SK-N-SH (cell line): ENCODE measurements at regions of chr1 and their contacts with region 1.

Region 1: DNA sequence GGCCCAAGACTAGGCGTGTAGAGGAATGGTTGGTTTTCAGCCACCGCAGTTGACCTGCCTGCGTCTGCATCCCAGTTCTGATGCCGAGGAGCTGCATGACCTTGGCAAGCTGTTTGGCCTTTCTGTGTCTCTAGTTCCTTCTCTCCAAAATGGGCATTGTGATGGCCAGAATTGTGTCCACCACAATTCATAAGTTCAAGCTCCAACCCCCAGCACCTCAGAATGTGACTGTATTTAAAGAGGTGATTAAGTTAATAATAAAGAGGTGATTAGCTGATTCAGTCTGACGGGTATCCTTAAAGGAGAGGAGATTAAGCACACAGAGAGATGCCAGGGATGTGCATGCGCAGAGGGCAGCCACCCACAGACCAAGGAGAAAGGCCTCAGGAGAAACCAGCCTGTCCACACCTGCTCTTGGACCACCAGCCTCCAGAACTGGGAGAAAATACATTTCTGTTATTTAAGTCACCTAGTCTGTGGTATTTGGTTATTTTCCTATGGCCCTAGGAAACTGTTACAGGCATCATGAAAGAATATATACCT is 28.5 kb downstream of the MAB21L3 start:
- DNase-seq: no peak
- H3K4me3 ChIP-seq: no peak overlapping the region
- H3K27ac ChIP-seq: no peak overlapping the region
- H3K4me1 ChIP-seq: peaks cover 0 to 3% of the 10 kb centered on the region in 2 experiments; a peak in 1 of 4 replicates
- H3K27me3 ChIP-seq: no peaks in the 10 kb centered on the region
- CTCF ChIP-seq: no peak
- EP300 ChIP-seq: no peak
- RAD21 ChIP-seq: no peak

Region 2: DNA sequence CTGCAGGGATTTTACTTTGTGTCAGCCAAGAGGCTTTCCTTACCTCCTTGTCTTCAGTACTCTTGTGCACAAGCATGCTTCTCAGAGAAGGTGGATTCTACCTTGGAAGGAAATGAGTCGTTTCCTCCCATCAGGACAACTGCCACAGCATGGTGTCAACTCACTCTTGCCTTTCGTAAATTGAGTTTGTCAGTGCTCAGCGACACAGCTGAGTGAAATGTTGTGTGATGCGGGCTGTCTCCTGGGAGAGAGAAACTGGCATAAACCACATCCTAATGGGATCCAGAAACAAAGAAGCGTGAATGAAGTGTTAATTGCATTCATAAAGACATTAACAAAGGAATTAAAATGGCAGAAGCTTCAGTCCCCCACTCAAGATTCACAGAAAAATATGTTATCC is 214.9 kb before region 1 on chr1:
- CTCF ChIA-PET with region 1: no interaction called
- POLR2A ChIA-PET with region 1: no interaction called
- DNase-seq: no peak
- H3K4me3 ChIP-seq: no peak overlapping the region
- H3K27ac ChIP-seq: no peak overlapping the region
- H3K4me1 ChIP-seq: peaks cover 4 to 23% of the 10 kb centered on the region in 2 experiments; a peak in 3 of 4 replicates
- H3K27me3 ChIP-seq: no peaks in the 10 kb centered on the region
- CTCF ChIP-seq: no peak
- EP300 ChIP-seq: no peak
- RAD21 ChIP-seq: no peak

Region 3: DNA sequence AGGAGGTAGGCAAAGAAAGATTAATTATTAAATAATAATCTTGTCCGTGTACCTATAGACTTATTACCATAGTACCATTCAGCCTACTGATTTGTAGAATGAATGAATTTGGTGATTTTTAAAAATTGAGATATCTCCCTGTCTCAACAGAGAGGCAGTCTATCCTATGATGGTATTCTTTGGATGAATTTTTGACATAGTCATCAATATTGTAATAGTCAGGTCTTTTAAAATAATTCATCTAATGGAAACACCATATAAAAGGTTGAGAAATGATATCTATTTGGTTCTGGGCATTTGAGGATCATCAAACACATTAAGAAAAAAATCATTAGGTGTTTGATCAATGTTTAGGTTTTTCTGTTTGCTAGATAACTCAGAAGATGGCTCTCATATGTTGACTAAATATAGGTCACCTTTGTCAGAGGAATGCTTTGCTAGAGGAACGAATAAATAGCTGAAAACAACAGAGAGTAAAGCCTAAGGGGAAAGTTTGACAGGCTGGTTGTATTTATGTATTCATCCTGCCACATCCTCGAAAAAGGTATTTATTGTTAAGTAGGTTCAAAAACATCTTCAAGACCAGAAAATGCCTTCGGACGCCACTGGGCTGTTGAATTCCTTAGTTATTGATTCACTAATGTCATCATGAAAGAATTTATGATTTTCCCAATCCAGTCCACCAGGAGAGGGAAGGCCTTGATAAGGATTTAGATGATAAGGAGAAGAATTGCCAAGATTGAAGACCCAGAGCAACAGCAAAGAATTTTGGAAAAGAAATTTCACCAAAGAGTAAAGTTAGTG is 63.9 kb before region 1 on chr1:
- CTCF ChIA-PET with region 1: no interaction called
- POLR2A ChIA-PET with region 1: no interaction called
- DNase-seq: no peak
- H3K4me3 ChIP-seq: no peak overlapping the region
- H3K27ac ChIP-seq: no peak overlapping the region
- H3K4me1 ChIP-seq: no peaks in the 10 kb centered on the region; a peak in 1 of 4 replicates
- H3K27me3 ChIP-seq: no peaks in the 10 kb centered on the region
- CTCF ChIP-seq: no peak
- EP300 ChIP-seq: no peak
- RAD21 ChIP-seq: no peak

Region 4: DNA sequence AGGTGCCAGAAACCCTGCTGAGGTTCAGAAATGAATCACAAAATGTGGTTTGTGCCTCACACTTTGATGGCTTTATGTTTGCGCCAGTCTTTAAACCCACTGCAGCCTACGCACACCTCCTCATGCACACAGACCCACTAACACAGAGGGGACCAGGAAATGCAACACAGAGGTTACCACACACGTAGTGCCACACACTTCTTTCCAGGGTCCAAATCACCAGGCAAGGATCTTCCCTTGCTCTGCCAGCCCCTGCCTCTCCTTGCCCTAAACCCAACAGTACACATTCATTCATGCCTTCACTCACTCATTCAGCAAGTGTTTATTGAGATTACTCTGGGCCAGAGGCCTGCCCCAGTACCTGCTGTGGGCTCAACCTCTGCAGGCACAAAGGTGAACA is 11.0 kb before region 1 on chr1:
- CTCF ChIA-PET with region 1: interaction called, 42 read pairs
- POLR2A ChIA-PET with region 1: no interaction called
- DNase-seq: no peak
- H3K4me3 ChIP-seq: no peak overlapping the region
- H3K27ac ChIP-seq: no peak overlapping the region
- H3K4me1 ChIP-seq: peaks cover 0 to 5% of the 10 kb centered on the region in 2 experiments; a peak in 2 of 4 replicates
- H3K27me3 ChIP-seq: peaks cover 10% of the 10 kb centered on the region; the same call in 1 of the 2 replicates
- CTCF ChIP-seq: no peak
- EP300 ChIP-seq: no peak
- RAD21 ChIP-seq: no peak

Region 5: DNA sequence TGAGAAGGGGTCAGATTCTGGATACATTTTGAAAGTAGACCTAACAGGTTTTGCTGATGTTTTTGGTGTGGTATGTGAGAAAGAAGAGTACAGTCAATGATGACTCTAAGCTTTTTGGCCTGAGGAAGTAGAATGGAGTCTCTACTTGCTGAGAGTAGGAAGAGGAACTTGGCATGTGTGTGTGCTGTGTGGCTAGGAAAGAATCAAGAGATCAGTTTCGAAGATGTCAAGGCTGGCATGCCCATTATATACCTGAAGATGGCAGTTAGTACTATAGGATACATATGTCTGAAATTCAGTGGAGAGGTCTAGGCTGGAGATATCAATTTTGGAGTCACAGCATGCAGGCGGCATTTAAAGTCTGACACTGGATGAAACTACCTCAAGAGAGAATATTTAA is 36.0 kb after region 1 on chr1:
- CTCF ChIA-PET with region 1: interaction called, 13 read pairs
- POLR2A ChIA-PET with region 1: no interaction called
- DNase-seq: no peak
- H3K4me3 ChIP-seq: no peak overlapping the region
- H3K27ac ChIP-seq: no peak overlapping the region
- H3K4me1 ChIP-seq: peaks cover 0 to 4% of the 10 kb centered on the region in 2 experiments; a peak in 1 of 4 replicates
- H3K27me3 ChIP-seq: no peaks in the 10 kb centered on the region
- CTCF ChIP-seq: no peak
- EP300 ChIP-seq: no peak
- RAD21 ChIP-seq: no peak

Region 6: DNA sequence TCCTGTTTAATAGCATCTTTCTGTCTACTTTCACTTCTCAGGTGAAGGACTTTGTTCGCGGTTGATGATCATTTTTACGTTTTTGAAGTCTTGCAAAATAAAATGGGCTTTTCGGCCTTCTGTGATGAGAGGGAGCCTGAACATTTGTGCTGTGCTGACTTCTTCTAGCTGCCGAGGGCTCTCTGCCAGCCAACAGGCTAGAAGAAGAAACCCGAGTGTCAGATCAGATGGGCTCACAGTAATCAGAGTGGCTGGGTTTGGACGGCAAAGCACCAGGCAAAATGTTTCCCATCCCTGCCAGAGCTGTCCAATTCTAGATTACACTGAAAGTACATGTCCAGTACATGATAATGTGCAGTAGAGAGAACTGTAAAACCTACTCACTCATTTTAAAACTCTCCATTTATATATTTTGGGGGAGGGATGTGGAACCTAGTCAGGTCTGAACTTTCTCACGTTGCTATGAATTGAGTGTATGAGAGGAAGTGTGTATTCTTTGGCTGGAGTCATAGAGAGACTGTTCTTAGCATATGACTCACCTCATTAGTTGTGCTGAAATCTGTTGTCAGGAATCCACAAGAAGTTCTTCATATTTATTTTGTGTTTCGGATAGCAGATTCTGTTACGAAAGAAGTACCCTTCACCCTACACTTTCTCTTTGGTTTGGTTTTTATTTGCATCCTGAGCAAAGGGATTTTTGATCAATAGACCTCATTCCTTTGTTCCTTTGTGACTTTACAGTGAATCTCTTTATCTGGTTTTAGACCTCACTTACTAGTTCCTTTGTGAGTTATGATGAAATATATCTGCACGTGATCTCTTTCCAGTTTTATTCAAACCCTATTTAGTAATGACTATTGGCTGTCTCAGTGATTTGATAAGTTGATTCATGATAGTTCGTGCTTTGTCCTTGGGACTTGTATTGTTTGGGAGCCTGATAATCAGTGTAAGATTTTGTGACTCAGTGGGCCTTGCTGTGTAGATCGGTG is 238.2 kb after region 1 on chr1:
- CTCF ChIA-PET with region 1: interaction called, 16 read pairs
- POLR2A ChIA-PET with region 1: interaction called, 3 read pairs
- DNase-seq: peak; percentile 38
- H3K4me3 ChIP-seq: peak overlapping the region; percentile 24 to 71; a peak in 3 of 4 replicates
- H3K27ac ChIP-seq: peak overlapping the region; percentile 84 to 98
- H3K4me1 ChIP-seq: peaks cover 47 to 57% of the 10 kb centered on the region in 2 experiments
- H3K27me3 ChIP-seq: no peaks in the 10 kb centered on the region
- CTCF ChIP-seq: no peak
- EP300 ChIP-seq: no peak
- RAD21 ChIP-seq: no peak

Region 7: GRCh38 chr1:116472431-116472961 is 332.8 kb after region 1 on chr1:
- CTCF ChIA-PET with region 1: interaction called, 35 read pairs
- POLR2A ChIA-PET with region 1: interaction called, 3 read pairs
- DNase-seq: peak; percentile 57
- H3K4me3 ChIP-seq: no peak overlapping the region
- H3K27ac ChIP-seq: peak overlapping the region in 1 of 2 experiments; percentile 90; a peak in 2 of 4 replicates
- H3K4me1 ChIP-seq: peaks cover 6 to 27% of the 10 kb centered on the region in 2 experiments; a peak in 3 of 4 replicates
- H3K27me3 ChIP-seq: no peaks in the 10 kb centered on the region
- CTCF ChIP-seq: no peak
- EP300 ChIP-seq: peak in 1 of 2 experiments; percentile 29; a peak in 1 of 4 replicates
- RAD21 ChIP-seq: no peak

Region 8: GRCh38 chr1:116580446-116581322 is 441.0 kb after region 1 on chr1:
- CTCF ChIA-PET with region 1: no interaction called
- POLR2A ChIA-PET with region 1: no interaction called
- DNase-seq: no peak
- H3K4me3 ChIP-seq: no peak overlapping the region
- H3K27ac ChIP-seq: no peak overlapping the region
- H3K4me1 ChIP-seq: peaks cover 0 to 5% of the 10 kb centered on the region in 2 experiments; a peak in 1 of 4 replicates
- H3K27me3 ChIP-seq: no peaks in the 10 kb centered on the region
- CTCF ChIP-seq: no peak
- EP300 ChIP-seq: no peak
- RAD21 ChIP-seq: no peak